Activated T-helper 2 cell treated with anti-CD3 and anti-CD28 coated beads, Interferon-gamma antibody, Interleukin-2, Interleukin-4, amounts not matched to agents 10 μg/mL and 5 μg/mL and 100 μg/mL, durations not matched to agents 14 hours and 24 hours and 36 hours (primary cell): ENCODE measurements at regions of chr11 and their contacts with region 1.

Region 1: DNA sequence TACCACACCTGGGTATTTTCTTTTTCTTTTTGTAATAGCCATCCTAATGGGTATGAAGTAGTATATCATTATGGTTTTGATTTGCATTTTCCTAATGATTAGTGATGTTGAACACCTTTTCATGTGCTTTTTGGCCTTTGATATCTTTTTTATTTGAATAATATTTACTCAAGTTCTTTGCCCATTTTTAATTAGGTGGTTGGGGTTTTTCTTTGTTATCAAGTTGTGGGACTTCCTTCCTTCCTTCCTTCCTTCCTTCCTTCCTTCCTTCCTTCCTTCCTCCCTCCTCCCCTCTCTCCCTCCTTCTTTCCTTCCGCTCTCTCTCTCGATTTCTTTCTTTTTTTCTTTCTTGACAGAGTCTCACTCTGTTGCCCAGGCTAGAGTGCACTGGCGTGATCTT is 75.0 kb upstream of the PDGFD start:
- DNase-seq: no peak
- H3K4me3 Mint-ChIP-seq: no peak overlapping the region
- H3K27ac Mint-ChIP-seq: no peak overlapping the region
- H3K4me1 Mint-ChIP-seq: no peaks in the 10 kb centered on the region
- H3K27me3 Mint-ChIP-seq: no peaks in the 10 kb centered on the region

Region 2: GRCh38 chr11:104275992-104276391 is 37.1 kb after region 1 on chr11:
- intact Hi-C with region 1: loop called (anchors 1 kb)
- DNase-seq: no peak
- H3K4me3 Mint-ChIP-seq: no peak overlapping the region
- H3K27ac Mint-ChIP-seq: no peak overlapping the region
- H3K4me1 Mint-ChIP-seq: no peaks in the 10 kb centered on the region
- H3K27me3 Mint-ChIP-seq: no peaks in the 10 kb centered on the region